Adrenal gland (tissue), 19 donors: ENCODE measurements at regions of chr7 and their contacts with region 1.

Region 1: GRCh38 chr7:21507626-21508343 is 35.1 kb upstream of the DNAH11 start:
- DNase-seq: peak; percentile 55 to 80 (median 69)
- H3K4me3 ChIP-seq: no peak overlapping the region
- H3K27ac ChIP-seq: no peak overlapping the region
- H3K4me1 ChIP-seq: no peaks in the 10 kb centered on the region
- H3K27me3 ChIP-seq: no peaks in the 10 kb centered on the region
- CTCF ChIP-seq: peak; percentile 75 to 88 (median 80)
- POLR2A ChIP-seq: no peak

Region 2: GRCh38 chr7:20786779-20787659 is 720.8 kb before region 1 on chr7 and contains the start of gene SP8:
- intact Hi-C with region 1: loop called in 1 of 2 experiments (anchors 10 kb)
- DNase-seq: no peak
- H3K4me3 ChIP-seq: peak within 1 kb of the TSS in 1 of 4 donors; percentile 37
- H3K27ac ChIP-seq: no peak within 1 kb of the TSS
- H3K4me1 ChIP-seq: peaks cover 5 to 20% of the 10 kb centered on the region in 2 donors
- H3K27me3 ChIP-seq: peaks cover 98% of the 10 kb centered on the region
- CTCF ChIP-seq: no peak
- POLR2A ChIP-seq: no peak
- total RNA-seq, gene SP8: not detected

Region 3: DNA sequence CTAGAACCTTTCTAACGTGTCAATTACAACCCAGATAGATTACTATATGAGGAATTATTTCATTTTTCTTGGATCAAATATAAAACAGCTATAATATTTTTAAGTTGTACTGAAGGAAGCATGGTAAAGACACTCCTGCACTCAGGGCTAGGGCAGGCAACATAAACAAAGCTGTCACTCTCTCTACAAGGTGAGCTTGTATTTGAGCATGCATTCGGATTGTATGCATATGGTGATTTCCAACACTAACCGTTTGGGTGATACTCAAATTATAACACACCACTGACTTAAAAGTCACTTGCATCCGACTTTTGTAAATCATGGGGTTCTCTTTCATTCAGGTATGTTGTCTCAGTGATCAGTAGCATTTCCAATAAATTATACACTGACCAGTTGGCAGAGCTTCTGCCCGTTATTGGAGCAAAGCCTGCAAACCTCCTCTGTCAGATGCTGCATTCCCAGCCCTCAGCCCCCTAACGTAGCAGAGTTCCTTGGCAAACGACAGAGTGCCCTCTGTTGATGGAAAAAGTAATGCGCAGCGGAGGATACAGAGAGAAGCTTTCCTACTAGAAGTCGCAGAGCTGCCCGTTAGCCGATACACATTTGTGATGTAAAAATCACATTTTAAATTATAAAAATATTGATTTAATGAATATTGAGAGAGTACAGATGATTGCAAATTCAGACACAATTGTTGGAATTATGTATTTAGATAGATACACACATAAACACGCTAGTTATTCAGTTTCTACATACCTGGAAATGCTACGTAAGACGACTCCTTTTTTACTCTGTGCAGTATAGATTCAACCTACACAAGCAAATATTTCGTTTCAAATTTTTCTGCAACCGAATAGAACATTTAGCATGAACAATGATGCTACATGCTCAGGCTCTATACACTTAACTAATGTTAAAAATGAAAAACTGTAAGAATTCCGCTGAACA is 253.8 kb before region 1 on chr7:
- intact Hi-C with region 1: loop called in 1 of 2 experiments (anchors 10 kb)
- DNase-seq: peak; percentile 18 to 54 (median 39)
- H3K4me3 ChIP-seq: no peak overlapping the region
- H3K27ac ChIP-seq: no peak overlapping the region
- H3K4me1 ChIP-seq: no peaks in the 10 kb centered on the region
- H3K27me3 ChIP-seq: peaks cover 52% of the 10 kb centered on the region
- CTCF ChIP-seq: peak; percentile 5 to 46 (median 24)
- POLR2A ChIP-seq: no peak

Region 4: GRCh38 chr7:21261627-21262594 is 245.9 kb before region 1 on chr7:
- intact Hi-C with region 1: loop called (anchors 5 to 10 kb)
- DNase-seq: peak in 5 of 7 donors; percentile 10 to 52 (median 20)
- H3K4me3 ChIP-seq: no peak overlapping the region
- H3K27ac ChIP-seq: no peak overlapping the region
- H3K4me1 ChIP-seq: no peaks in the 10 kb centered on the region
- H3K27me3 ChIP-seq: no peaks in the 10 kb centered on the region
- CTCF ChIP-seq: peak in 4 of 6 experiments; percentile 24 to 43 (median 38)
- POLR2A ChIP-seq: no peak

Region 5: DNA sequence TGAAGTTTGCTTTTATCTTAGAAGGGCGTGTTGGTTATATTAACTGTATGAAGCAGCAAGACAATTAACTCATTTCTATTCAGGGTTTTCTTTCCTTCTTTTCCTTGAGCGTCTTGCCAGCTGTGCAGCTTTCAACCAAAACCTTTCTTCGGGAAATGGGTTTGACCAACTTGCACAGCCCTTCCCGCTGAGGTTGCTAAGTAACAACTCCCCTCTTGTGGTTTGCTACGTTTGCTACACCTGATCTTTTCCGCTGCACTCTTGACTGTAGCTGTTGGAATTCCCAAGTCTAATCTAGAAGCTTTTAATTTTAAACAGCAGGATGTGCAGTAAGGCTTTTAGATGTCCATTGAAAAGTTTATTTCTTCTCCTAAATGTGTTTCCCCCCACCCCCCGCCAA is 321.1 kb after region 1 on chr7:
- intact Hi-C with region 1: no loop called
- DNase-seq: no peak
- H3K4me3 ChIP-seq: no peak overlapping the region
- H3K27ac ChIP-seq: no peak overlapping the region
- H3K4me1 ChIP-seq: no peaks in the 10 kb centered on the region
- H3K27me3 ChIP-seq: no peaks in the 10 kb centered on the region
- CTCF ChIP-seq: no peak
- POLR2A ChIP-seq: no peak

Region 6: GRCh38 chr7:22156205-22156604 is 648.4 kb after region 1 on chr7:
- intact Hi-C with region 1: no loop called
- DNase-seq: peak in 2 of 7 donors; percentile 12 to 25
- H3K4me3 ChIP-seq: no peak overlapping the region
- H3K27ac ChIP-seq: no peak overlapping the region
- H3K4me1 ChIP-seq: no peaks in the 10 kb centered on the region
- H3K27me3 ChIP-seq: no peaks in the 10 kb centered on the region
- CTCF ChIP-seq: no peak
- POLR2A ChIP-seq: no peak